Dorsolateral prefrontal cortex (tissue), 120 donors: ENCODE measurements at regions of chr12 and their contacts with region 1.

Region 1: GRCh38 chr12:546921-547845 is 87.4 kb downstream of the B4GALNT3 start:
- DNase-seq: peak in 8 of 10 donors; percentile 44 to 84 (median 56)
- H3K4me3 ChIP-seq: peak overlapping the region in 42 of 59 donors; percentile 1 to 50 (median 25)
- H3K27ac ChIP-seq: peak overlapping the region in 21 of 59 donors; percentile 4 to 75 (median 41)
- H3K27me3 ChIP-seq: no peaks in the 10 kb centered on the region
- CTCF ChIP-seq: peak; percentile 58 to 100 (median 98)

Region 2: GRCh38 chr12:414859-415258 is 132.3 kb before region 1 on chr12:
- intact Hi-C with region 1: no loop called
- DNase-seq: no peak
- H3K4me3 ChIP-seq: no peak overlapping the region
- H3K27ac ChIP-seq: no peak overlapping the region
- H3K27me3 ChIP-seq: no peaks in the 10 kb centered on the region
- CTCF ChIP-seq: no peak

Region 3: GRCh38 chr12:442235-442884 is 104.8 kb before region 1 on chr12:
- intact Hi-C with region 1: loop called in 1 of 2 experiments (anchors 2 kb)
- DNase-seq: peak in 7 of 10 donors; percentile 14 to 76 (median 57)
- H3K4me3 ChIP-seq: no peak overlapping the region
- H3K27ac ChIP-seq: no peak overlapping the region
- H3K27me3 ChIP-seq: no peaks in the 10 kb centered on the region
- CTCF ChIP-seq: peak; percentile 69 to 92 (median 84)

Region 4: GRCh38 chr12:452667-453210 is 94.4 kb before region 1 on chr12:
- intact Hi-C with region 1: loop called (anchors 1 to 2 kb)
- DNase-seq: peak in 2 of 10 donors; percentile 18 to 34
- H3K4me3 ChIP-seq: no peak overlapping the region
- H3K27ac ChIP-seq: peak overlapping the region in 1 of 59 donors; percentile 34
- H3K27me3 ChIP-seq: no peaks in the 10 kb centered on the region
- CTCF ChIP-seq: peak in 1 of 56 donors; percentile 28